MCF 10A (cell line): ENCODE measurements at regions of chr11 and their contacts with region 1.

Region 1: DNA sequence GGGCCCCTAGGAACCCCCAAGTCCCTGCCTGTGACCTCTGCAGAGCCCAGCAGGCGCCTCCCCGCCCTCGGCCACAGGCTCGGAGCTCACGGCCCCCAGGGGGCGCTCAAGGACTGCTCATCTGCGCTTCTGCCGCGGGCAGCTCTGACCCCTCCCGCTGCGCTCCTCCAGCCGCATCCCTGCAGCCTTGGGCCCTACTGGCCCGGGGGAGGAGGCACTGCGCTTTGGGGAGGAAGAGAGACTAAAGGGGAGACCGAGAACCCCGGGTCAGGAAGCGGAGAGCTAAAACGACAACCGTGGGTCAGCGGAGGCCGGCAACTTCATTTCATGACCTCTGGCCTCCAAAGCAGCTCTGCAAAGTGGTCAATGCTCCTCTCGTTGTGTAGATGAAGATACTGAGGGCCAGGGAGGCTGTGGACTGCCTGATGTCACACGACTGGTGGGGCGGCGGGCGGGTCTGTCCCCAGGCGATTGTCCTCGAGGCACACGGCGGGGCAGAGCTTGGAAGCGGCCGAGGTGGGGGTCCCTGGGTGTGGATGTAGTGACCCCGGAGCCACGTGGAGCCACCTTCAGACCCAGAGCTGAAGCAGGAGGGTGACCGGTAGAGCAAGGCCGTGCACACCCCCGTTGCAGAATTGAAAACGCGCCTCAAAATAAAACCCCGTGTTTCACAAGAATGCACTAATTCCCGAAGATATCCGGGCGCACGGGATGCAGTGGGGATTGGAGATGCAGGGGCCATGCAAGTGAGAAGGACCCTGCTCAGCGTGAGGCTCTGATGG is 2.7 kb upstream of the KRTAP5-6 start:
- DNase-seq: peak; percentile 69
- H3K4me3 Mint-ChIP-seq: peak overlapping the region; percentile 11
- H3K27ac Mint-ChIP-seq: no peak overlapping the region
- H3K4me1 Mint-ChIP-seq: peaks cover 11% of the 10 kb centered on the region
- H3K27me3 Mint-ChIP-seq: no peaks in the 10 kb centered on the region
- CTCF ChIP-seq: peak; percentile 91

Region 2: DNA sequence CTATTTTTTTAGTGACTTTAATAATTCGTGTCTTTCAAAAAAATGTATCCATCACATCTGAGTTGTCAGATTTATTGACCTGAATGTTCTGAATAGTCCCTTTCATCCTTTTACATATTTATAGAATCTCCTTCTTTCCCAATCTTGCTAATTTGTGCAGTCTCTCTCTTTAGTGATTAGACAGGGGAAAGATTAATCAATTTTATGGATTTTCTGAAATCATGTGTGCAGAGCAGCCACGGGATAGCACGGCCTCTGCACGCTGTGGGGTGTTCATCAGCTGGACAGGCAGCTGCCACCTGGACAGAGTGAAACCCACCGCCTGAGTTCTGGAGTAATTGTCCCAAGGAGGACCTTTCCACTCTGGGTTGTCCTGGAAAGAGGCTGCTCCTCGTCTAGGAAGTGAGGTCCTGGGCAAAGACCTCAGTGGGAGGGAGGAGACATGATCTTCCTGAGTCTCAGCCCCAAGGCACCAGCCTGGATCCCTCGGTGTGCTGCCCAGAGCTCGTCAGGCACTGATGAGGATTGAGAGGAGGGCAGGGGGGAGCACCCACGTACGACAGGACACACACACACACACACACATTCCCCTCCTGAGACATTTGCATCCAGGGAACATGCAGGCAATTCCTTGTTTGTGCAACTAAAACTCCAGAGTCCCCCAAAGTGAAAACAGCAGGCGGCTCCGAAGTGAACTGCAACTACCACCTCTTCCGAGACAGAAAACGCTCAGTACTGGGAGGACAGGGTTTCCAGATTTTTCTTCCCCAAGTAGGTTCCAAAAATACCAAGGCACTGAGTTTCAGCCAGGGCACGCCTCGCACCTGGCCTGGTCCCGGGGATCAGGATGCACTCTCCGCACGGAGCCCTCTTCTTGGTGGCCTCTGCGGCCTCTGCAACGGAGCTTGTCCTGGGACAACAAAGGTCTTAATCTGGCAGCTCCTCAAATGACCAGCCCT is 19.8 kb before region 1 on chr11:
- CTCF ChIA-PET with region 1: interaction called, 31 read pairs
- POLR2A ChIA-PET with region 1: no interaction called
- intact Hi-C with region 1: loop called (anchors 2 kb)
- DNase-seq: no peak
- H3K4me3 Mint-ChIP-seq: no peak overlapping the region
- H3K27ac Mint-ChIP-seq: no peak overlapping the region
- H3K4me1 Mint-ChIP-seq: no peaks in the 10 kb centered on the region
- H3K27me3 Mint-ChIP-seq: peaks cover 78% of the 10 kb centered on the region
- CTCF ChIP-seq: no peak

Region 3: GRCh38 chr11:1763796-1764661 is 69.8 kb after region 1 on chr11 and contains the start of gene CTSD:
- CTCF ChIA-PET with region 1: interaction called, 14 read pairs
- POLR2A ChIA-PET with region 1: interaction called, 4 read pairs
- intact Hi-C with region 1: no loop called
- DNase-seq: peak; percentile 76
- H3K4me3 Mint-ChIP-seq: peak within 1 kb of the TSS; percentile 77
- H3K27ac Mint-ChIP-seq: peak within 1 kb of the TSS; percentile 39
- H3K4me1 Mint-ChIP-seq: peaks cover 10% of the 10 kb centered on the region
- H3K27me3 Mint-ChIP-seq: no peaks in the 10 kb centered on the region
- CTCF ChIP-seq: no peak
- total RNA-seq, gene CTSD: 366 and 367 TPM in 2 replicates

Region 4: GRCh38 chr11:1844221-1845094 is 150.2 kb after region 1 on chr11:
- CTCF ChIA-PET with region 1: interaction called, 11 read pairs
- POLR2A ChIA-PET with region 1: no interaction called
- intact Hi-C with region 1: no loop called
- DNase-seq: peak; percentile 60
- H3K4me3 Mint-ChIP-seq: peak overlapping the region; percentile 48
- H3K27ac Mint-ChIP-seq: peak overlapping the region; percentile 77
- H3K4me1 Mint-ChIP-seq: peaks cover 40% of the 10 kb centered on the region
- H3K27me3 Mint-ChIP-seq: no peaks in the 10 kb centered on the region
- CTCF ChIP-seq: no peak

Region 5: DNA sequence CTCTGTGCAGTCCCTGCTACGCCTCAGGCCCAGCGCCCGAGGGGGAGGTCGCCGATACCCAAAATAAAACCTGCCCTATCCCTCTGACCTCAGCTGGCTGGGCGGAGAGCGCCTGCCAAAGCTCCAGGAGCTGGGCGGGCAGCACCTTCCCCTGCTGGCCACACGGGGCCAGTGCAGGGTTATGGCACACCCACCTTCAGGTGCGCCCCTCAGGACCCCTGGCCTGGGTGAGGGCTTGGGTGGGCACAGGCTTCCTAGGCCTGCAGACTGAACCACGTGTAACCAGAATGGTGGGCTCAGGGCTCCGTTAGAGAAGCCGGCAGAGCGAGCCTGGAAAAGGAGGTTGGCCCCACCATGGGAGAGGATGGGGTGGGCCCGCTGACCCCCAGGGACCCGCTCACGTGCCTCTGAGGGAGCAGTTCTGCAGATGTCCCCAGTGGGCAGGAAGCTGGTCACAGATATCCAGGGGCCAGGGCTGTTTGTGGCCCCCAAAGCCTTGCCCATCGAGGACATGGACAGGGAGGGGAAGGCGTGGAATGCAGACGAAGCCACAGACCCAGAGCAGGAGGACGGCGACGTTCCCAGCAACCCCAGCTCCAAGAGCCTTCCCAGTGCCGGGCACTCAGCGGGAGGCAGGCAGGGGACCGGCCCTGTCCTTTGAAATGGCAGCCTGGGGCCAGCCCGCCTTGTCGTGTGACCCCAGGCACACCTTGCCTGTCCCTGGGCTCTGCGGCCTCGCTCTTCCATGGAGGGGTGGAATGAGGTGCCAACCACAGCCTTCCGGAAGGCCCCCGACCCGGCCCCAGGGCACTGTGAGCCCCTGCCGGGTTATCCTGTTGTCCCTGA is 223.6 kb after region 1 on chr11:
- CTCF ChIA-PET with region 1: interaction called, 13 read pairs
- POLR2A ChIA-PET with region 1: no interaction called
- intact Hi-C with region 1: loop called (anchors 1 kb)
- DNase-seq: no peak
- H3K4me3 Mint-ChIP-seq: no peak overlapping the region
- H3K27ac Mint-ChIP-seq: no peak overlapping the region
- H3K4me1 Mint-ChIP-seq: no peaks in the 10 kb centered on the region
- H3K27me3 Mint-ChIP-seq: peaks cover 25% of the 10 kb centered on the region
- CTCF ChIP-seq: peak; percentile 38